Aorta (tissue), 5 donors: ENCODE measurements at regions of chr4 and their contacts with region 1.

Region 1: DNA sequence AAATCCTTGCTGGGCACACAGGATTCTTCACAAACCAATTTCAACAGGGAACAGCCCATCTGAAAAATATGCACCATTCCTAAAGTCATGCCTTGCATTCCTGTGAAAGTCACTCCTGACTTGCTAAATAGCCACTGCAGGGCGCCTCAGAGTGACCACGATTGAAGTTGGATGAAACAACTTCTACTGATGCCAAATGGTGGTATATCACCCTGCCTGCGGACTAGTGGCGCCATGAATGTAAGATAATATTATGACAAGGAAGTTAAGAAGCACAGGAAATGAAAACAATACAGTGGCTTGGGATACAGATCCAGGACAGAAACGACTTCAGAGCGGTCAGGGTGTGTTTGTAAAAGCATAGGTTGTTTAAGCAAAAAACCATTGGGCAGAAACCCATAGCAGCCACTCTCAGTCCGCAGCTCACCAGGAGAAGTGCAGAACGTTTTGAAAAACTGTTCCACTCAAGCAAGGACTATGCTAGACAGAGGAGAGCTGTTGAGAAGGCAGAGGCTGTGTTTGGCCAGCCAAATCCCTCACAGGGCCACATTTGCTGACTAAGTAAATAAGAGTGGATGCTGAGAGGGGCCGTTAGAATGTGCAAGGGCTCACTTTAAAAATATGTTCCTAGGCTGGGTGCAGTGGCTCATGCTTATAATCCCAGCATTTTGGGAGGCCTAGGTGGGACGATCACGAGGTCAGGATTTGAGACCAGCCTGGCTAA is 250.4 kb downstream of the PTTG2 start:
- DNase-seq: no peak
- ATAC-seq: peak; percentile 60
- H3K4me3 ChIP-seq: no peak overlapping the region
- H3K27ac ChIP-seq: peak overlapping the region; percentile 96 to 99
- H3K4me1 ChIP-seq: peaks cover 0 to 5% of the 10 kb centered on the region in 2 donors
- H3K27me3 ChIP-seq: no peaks in the 10 kb centered on the region

Region 2: DNA sequence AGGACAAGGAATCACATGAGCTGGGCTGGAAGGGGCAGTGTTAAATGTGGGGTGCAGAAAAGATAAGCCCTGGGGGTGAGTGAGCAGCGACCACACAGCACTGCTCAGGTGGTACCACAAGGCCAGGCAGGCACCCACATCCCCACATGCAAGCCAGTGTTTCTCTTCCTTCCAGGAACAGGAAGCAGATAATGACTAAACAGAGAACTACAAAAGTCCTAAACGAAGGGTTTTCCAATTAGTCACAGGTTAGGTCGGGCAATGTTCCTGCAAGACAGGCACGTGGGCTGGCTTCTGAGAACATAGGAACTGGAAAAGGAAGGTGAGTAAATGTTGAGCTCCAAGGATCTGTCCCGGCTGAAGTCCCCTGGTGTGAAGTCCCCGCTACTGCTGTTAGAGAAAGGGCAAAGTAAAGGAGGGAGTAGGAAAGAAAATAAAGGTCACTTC is 543.9 kb before region 1 on chr4:
- intact Hi-C with region 1: no loop called
- DNase-seq: peak in 1 of 2 donors; percentile 56
- ATAC-seq: peak; percentile 66
- H3K4me3 ChIP-seq: no peak overlapping the region
- H3K27ac ChIP-seq: no peak overlapping the region
- H3K4me1 ChIP-seq: peaks cover 7 to 9% of the 10 kb centered on the region in 2 donors
- H3K27me3 ChIP-seq: no peaks in the 10 kb centered on the region

Region 3: DNA sequence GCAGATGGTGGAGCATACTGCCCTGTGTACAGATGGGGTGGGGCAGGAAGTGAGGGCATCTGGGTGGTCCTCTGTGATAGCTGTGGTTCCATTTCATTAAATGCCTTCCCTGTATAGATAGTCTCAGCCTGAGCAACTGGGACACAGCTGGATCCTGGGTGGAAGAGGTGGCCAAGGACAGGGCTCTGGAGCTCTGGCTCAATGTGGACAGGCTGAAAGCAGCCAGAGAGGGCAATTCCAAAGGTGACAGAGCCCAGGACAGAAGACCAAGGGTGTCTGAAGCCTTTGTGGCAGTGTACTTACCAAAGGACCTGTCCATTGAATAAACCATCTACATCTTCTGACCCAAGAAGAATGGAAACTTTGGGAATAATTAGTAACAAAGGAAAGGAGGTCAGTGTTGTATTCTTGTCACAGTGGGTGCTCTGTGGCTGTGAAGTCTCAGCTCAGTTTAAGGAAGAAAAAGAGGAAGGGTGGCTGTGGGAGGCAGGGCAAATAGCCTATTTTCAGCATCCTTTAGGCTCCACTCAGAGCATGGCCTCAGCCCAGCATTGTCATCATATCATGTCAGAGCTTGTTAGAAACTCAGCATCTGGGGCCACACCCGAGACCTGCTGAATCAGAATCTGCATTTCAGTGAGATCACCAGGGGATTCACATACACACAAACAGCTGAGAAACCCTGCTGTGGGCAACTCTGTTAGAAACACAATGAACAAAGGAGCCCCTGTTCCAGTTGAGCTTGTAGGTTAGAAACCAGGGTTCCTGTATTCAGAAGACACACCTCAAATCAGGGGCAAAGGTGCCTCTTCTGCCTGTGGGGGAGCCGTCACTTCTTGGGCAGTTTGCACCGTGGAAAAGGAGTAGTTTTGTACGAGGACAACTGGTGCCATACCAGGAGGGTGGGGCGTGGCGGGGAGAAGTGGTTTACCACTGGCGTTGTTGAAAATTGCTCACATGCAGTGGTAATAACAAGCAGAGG is 81.8 kb before region 1 on chr4:
- intact Hi-C with region 1: no loop called
- DNase-seq: no peak
- ATAC-seq: no peak
- H3K4me3 ChIP-seq: no peak overlapping the region
- H3K27ac ChIP-seq: no peak overlapping the region
- H3K4me1 ChIP-seq: no peaks in the 10 kb centered on the region
- H3K27me3 ChIP-seq: no peaks in the 10 kb centered on the region

Region 4: GRCh38 chr4:38154681-38155608 is 55.6 kb before region 1 on chr4:
- intact Hi-C with region 1: no loop called
- DNase-seq: no peak
- ATAC-seq: peak; percentile 26
- H3K4me3 ChIP-seq: no peak overlapping the region
- H3K27ac ChIP-seq: no peak overlapping the region
- H3K4me1 ChIP-seq: peaks cover 0 to 2% of the 10 kb centered on the region in 2 donors
- H3K27me3 ChIP-seq: no peaks in the 10 kb centered on the region

Region 5: DNA sequence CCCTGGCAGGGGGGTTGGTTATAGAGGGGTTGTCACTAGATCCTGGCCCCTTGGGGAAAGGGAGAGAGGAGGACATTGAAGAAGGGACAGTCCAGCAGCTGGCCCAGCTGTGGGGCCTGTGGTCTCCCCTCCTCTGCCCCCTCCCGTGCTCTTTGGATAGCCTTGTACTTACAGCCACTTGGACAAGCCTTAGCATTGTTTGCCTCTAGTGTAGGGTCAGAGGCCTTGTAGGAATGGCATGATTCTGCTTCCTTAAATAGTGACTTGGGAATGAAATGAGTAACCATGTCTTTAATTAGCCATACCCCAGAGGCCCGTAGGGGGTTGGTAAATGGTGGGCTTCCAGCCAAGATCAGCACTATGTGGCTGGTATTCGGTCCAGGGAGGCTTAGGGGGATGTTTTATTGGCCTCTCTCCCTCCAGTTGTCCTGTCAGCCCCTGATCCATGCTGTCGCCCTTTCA is 19.8 kb before region 1 on chr4:
- intact Hi-C with region 1: loop called in 1 of 2 experiments (anchors 2 kb)
- DNase-seq: peak; percentile 84 to 88
- ATAC-seq: peak; percentile 88
- H3K4me3 ChIP-seq: no peak overlapping the region
- H3K27ac ChIP-seq: peak overlapping the region; percentile 81 to 85
- H3K4me1 ChIP-seq: peaks cover 0 to 2% of the 10 kb centered on the region in 2 donors
- H3K27me3 ChIP-seq: no peaks in the 10 kb centered on the region

Region 6: DNA sequence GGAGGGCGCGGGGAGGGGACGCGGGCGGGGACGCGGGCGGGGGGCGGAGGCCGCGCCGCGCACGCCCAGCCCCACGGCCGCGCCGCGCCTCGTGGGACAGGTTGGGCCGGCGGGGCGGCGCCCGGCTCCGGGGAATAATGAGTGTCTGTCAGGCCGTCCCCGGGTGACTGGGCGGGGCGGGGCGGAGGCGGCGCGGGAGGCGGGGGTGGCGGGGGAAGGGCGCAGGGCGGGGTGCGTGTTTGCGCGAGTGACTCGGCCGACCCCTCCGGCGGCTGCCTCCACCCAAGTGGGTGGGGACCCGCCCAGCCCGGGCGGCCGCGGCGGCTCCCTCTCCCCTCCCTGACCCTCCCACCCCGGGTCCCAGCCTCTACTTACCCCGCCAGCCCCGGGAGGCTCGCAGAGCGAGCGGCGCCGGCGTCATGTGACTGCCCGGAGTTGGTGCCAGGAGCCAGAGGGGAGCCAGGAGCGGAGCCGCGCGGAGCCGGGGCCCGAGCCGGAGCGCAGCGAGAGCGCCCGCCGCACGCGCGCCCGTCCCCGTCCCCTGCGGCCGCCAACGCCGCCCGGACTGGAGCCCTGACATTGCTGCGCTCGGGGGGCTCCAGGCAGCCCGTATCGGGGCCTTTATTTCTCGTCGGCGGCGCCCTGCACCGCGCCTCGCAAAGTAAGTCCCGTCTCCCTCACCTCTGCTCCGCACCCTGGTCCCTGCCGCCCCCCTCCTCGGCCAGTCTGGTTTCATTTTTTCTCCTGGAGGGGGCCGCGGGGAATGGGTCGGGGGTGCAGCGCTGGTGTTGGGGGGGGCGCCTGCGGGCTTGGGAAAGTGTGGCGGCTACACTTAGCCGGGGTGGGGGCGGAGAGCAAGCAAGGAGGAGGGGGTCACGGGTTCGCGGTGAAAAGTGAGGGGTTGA is 453.5 kb after region 1 on chr4 and contains the start of gene KLF3:
- intact Hi-C with region 1: loop called in 1 of 2 experiments (anchors 5 kb)
- DNase-seq: peak; percentile 97
- ATAC-seq: peak; percentile 92
- H3K4me3 ChIP-seq: peak within 1 kb of the TSS; percentile 94 to 99
- H3K27ac ChIP-seq: peak within 1 kb of the TSS; percentile 96
- H3K4me1 ChIP-seq: peaks cover 0 to 2% of the 10 kb centered on the region in 2 donors
- H3K27me3 ChIP-seq: no peaks in the 10 kb centered on the region
- total RNA-seq, gene KLF3: 45.9 to 66.8 TPM